ENCODE measurements at regions of chr20 and their contacts with region 1.

Region 1: GRCh38 chr20:3115190-3116107 is 30.9 kb upstream of the AVP start:
- DNase-seq: peak in 2 of 6 donors; percentile 13 to 32
- ATAC-seq: peak; percentile 53 to 79 (median 72)
- H3K4me3 ChIP-seq: no peak overlapping the region
- H3K27ac ChIP-seq: no peak overlapping the region
- H3K4me1 ChIP-seq: no peaks in the 10 kb centered on the region
- H3K27me3 ChIP-seq: no peaks in the 10 kb centered on the region
- CTCF ChIP-seq: peak; percentile 44 to 79 (median 64)

Region 2: GRCh38 chr20:3051385-3052019 is 63.9 kb before region 1 on chr20:
- intact Hi-C with region 1: loop called in 1 of 3 experiments (anchors 10 kb)
- DNase-seq: no peak
- ATAC-seq: no peak
- H3K4me3 ChIP-seq: no peak overlapping the region
- H3K27ac ChIP-seq: no peak overlapping the region
- H3K4me1 ChIP-seq: peaks cover 0 to 8% (median 6%) of the 10 kb centered on the region in 3 donors
- H3K27me3 ChIP-seq: no peaks in the 10 kb centered on the region
- CTCF ChIP-seq: no peak

Region 3: GRCh38 chr20:3173610-3174441 is 58.4 kb after region 1 on chr20:
- intact Hi-C with region 1: loop called in 1 of 3 experiments (anchors 10 kb)
- DNase-seq: peak; percentile 88 to 98 (median 93)
- ATAC-seq: peak; percentile 88 to 94 (median 92)
- H3K4me3 ChIP-seq: peak overlapping the region; percentile 70 to 83 (median 74)
- H3K27ac ChIP-seq: peak overlapping the region; percentile 77 to 88 (median 85)
- H3K4me1 ChIP-seq: peaks cover 5 to 20% (median 18%) of the 10 kb centered on the region in 3 donors
- H3K27me3 ChIP-seq: no peaks in the 10 kb centered on the region
- CTCF ChIP-seq: no peak